H1 (cell line): ENCODE measurements at regions of chr6 and their contacts with region 1.

Region 1: DNA sequence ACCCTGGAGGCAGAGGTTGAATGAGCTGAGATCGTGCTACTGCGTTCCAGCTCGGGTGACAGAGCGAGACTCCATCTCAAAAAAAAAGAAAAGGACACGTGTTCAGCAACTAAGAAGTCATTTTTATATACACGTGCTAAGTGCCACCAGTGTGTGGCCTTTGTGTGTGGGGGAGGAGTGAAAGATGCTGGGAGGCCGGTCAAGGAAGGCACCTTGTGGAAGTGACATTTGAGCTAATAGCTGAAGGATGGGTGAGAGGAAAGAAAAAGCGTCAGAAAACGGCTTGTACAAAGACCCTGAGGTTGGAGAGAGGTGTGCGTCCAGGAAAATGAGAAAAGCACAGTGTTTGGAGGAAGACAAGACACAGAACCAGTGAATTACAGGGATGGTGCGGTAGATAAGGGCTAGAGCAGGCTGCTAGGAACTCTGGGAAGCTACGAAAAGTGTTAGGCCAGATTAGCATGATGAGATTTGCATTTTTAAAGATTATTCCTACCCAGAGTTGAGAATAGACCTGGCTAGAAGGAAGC is 11.6 kb downstream of the RREB1 start:
- DNase-seq: no peak
- H3K4me3 ChIP-seq: no peak overlapping the region
- H3K27ac ChIP-seq: no peak overlapping the region
- H3K4me1 ChIP-seq: peaks cover 0 to 13% (median 7%) of the 10 kb centered on the region in 4 experiments; a peak in 5 of 7 replicates
- H3K27me3 ChIP-seq: no peaks in the 10 kb centered on the region
- CTCF ChIP-seq: no peak
- EP300 ChIP-seq: no peak
- POLR2A ChIP-seq: no peak
- RAD21 ChIP-seq: no peak

Region 2: GRCh38 chr6:7073821-7074525 is 45.4 kb before region 1 on chr6:
- CTCF ChIA-PET with region 1: no interaction called
- POLR2A ChIA-PET with region 1: no interaction called
- DNase-seq: no peak
- H3K4me3 ChIP-seq: no peak overlapping the region
- H3K27ac ChIP-seq: no peak overlapping the region
- H3K4me1 ChIP-seq: no peaks in the 10 kb centered on the region
- H3K27me3 ChIP-seq: no peaks in the 10 kb centered on the region
- CTCF ChIP-seq: no peak
- EP300 ChIP-seq: no peak
- POLR2A ChIP-seq: no peak
- RAD21 ChIP-seq: no peak

Region 3: DNA sequence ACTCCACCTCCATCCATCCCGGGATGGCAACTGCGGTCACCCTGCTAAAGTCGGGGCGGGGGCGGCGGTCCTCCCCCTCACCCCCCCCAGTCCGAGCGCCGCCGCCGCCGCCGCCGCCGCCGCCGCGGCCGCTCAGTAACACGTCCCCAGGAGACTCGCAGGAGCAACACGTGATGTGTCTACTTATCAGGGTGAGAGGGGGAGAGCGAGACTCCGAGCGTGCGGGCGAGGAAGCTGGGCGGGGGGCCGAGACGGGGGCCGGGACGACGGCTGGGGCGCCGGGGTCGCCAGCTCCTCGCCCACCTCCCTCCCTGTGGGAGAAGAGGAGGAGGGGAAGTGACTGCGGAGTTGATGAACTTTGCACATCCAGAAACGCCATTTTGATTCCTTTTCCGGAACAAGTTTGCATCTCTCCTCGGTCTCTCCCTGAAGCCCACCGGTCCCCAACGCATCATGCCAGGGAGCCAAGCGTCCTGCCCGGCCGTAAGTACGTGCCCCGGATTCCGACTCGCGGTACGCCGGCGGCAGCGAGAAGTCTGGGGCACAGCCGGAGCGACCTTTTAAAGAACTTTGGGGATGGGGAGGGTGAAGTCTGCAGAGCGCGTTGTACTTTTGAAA is 11.7 kb before region 1 on chr6 and contains the start of gene RREB1:
- CTCF ChIA-PET with region 1: interaction called, 4 read pairs
- POLR2A ChIA-PET with region 1: interaction called, 11 read pairs
- DNase-seq: peak in 1 of 2 experiments; percentile 74
- H3K4me3 ChIP-seq: peak within 1 kb of the TSS; percentile 88 to 100 (median 96)
- H3K27ac ChIP-seq: no peak within 1 kb of the TSS
- H3K4me1 ChIP-seq: peaks cover 6 to 14% (median 7%) of the 10 kb centered on the region in 4 experiments
- H3K27me3 ChIP-seq: peaks cover 0 to 27% (median 12%) of the 10 kb centered on the region in 4 experiments; a peak in 6 of 7 replicates
- CTCF ChIP-seq: no peak
- EP300 ChIP-seq: no peak
- POLR2A ChIP-seq: no peak; a peak in 1 of 3 replicates
- RAD21 ChIP-seq: no peak
- total RNA-seq, gene RREB1: 30.9 and 34.7 TPM in 2 replicates

Region 4: GRCh38 chr6:7292596-7293255 is 173.4 kb after region 1 on chr6:
- CTCF ChIA-PET with region 1: no interaction called
- POLR2A ChIA-PET with region 1: no interaction called
- DNase-seq: no peak
- H3K4me3 ChIP-seq: no peak overlapping the region
- H3K27ac ChIP-seq: no peak overlapping the region
- H3K4me1 ChIP-seq: no peaks in the 10 kb centered on the region
- H3K27me3 ChIP-seq: no peaks in the 10 kb centered on the region
- CTCF ChIP-seq: no peak
- EP300 ChIP-seq: no peak
- POLR2A ChIP-seq: no peak
- RAD21 ChIP-seq: no peak

Region 5: GRCh38 chr6:7787137-7787608 is 667.8 kb after region 1 on chr6:
- CTCF ChIA-PET with region 1: no interaction called
- POLR2A ChIA-PET with region 1: no interaction called
- DNase-seq: no peak
- H3K4me3 ChIP-seq: no peak overlapping the region
- H3K27ac ChIP-seq: no peak overlapping the region
- H3K4me1 ChIP-seq: no peaks in the 10 kb centered on the region
- H3K27me3 ChIP-seq: no peaks in the 10 kb centered on the region
- CTCF ChIP-seq: no peak
- EP300 ChIP-seq: no peak
- POLR2A ChIP-seq: no peak
- RAD21 ChIP-seq: no peak